Activated naive CD4-positive, alpha-beta T cell treated with anti-CD3 and anti-CD28 coated beads for 36 hours (primary cell): ENCODE measurements at regions of chr20 and their contacts with region 1.

Region 1: DNA sequence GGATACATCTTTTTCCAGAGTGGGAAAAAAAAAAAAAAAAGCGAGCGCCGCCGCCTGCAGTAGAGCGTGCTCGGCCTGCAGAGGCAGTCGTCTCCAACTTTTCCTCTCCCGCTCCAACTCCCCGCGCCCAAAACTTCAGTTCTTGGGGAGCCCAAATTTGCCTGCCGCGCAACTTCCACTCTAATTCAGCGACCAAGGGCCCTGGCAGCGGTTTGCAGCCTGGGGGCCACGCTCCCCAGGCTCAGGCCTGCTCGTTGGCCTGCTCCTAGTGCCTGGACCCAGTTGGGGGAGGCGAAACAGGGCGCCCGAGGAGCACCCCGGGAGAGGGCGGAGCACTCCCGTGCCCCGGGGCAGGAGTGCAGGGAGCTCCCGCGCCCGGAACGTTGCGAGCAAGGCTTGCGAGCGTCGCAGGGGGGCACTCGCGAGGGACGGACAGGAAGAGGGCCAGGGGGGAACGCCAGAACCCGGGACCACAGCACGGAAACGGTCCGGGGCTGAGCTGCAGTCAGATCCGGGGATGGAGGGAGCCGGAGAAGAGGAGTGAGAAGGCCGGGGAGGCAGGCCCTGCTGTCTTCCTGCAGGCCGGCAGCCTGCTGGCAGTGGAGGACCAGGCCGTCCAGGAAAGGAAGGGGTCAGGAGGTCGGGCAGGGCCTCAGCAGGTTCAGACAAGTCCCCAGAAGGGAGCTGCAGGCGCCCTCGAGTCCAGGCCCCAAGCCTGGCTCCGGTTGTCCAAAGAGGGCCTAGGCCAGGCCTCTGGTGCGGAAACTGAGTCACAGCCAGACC is at the start of gene STX16:
- DNase-seq: peak; percentile 93
- H3K4me3 Mint-ChIP-seq: peak within 1 kb of the TSS; percentile 95
- H3K27ac Mint-ChIP-seq: peak within 1 kb of the TSS; percentile 99
- H3K4me1 Mint-ChIP-seq: peaks cover 17% of the 10 kb centered on the region
- H3K27me3 Mint-ChIP-seq: no peaks in the 10 kb centered on the region
- total RNA-seq, gene STX16: 127 TPM

Region 2: DNA sequence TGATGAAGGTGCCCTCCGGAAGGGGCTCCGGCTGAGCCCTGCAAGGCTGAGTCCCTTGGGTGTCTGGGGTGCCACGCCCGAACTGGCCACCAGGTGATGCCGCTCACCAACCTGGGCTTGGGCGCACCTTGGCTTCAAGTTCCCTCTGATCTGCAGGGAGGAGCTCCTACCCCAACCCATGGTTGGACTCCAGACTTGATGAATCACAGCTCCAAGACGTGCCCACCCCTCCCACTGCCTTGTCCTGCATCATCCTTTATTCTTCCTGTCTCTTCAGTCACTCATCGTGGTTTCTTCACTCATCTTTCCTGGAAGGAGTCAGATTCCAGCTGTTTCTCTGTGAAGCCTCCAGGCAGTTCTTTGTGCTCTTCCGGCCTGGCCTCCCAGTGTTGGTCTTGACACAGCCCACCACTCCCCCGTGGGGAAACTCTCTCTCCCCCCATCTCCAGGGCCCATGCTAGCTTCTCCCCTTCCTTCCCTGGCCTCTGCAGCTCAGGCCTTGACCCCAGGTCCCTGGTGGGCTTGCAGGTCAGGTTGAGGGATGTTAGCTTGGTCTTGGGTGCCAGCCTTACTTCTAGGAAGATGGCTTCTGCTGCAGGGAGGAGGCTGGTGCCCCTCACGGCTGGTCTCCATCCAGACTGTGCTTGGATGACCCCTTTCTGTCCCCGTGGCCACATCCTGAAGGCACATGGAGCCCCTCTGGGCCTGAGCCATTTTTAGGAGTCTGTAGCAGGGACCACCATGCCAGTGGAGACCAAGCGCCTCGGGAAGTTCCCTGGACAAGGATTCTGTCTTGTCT is 1028.2 kb before region 1 on chr20:
- CTCF ChIA-PET with region 1: no interaction called
- intact Hi-C with region 1: loop called (anchors 5 kb)
- DNase-seq: peak; percentile 88
- H3K4me3 Mint-ChIP-seq: no peak overlapping the region
- H3K27ac Mint-ChIP-seq: no peak overlapping the region
- H3K4me1 Mint-ChIP-seq: peaks cover 71% of the 10 kb centered on the region
- H3K27me3 Mint-ChIP-seq: no peaks in the 10 kb centered on the region

Region 3: GRCh38 chr20:58309575-58310290 is 341.2 kb before region 1 on chr20 and contains the start of gene RAB22A:
- CTCF ChIA-PET with region 1: no interaction called
- intact Hi-C with region 1: loop called (anchors 2 kb)
- DNase-seq: peak; percentile 81
- H3K4me3 Mint-ChIP-seq: peak within 1 kb of the TSS; percentile 93
- H3K27ac Mint-ChIP-seq: peak within 1 kb of the TSS; percentile 90
- H3K4me1 Mint-ChIP-seq: peaks cover 72% of the 10 kb centered on the region
- H3K27me3 Mint-ChIP-seq: no peaks in the 10 kb centered on the region
- total RNA-seq, gene RAB22A: 9.3 to 9.8 TPM

Region 4: DNA sequence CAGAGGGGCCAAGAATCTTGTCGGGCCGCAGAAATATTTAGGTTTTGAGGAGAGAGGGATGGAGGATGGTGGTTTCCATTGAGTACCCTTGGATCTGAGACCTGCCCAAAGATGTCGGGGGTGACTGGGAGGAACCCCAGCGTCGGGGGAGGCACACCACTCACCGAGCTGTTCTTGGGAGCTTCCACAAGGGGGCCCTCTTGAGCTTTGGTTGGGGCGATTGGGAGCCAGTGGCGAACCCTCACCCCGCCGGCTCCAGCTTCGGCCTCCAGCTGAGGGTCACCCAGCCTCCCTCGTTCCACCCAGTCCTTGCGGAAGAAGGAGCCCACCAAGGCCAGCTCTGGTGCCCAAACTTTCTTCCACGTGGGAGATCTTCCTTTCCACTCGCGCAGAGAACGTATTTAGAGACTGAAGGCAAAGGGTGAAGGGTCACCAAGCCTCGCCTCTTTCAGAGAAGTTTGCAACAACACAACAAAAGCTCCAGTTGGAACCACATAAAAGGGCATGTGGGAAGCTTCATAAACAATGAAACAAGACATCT is 169.4 kb before region 1 on chr20:
- CTCF ChIA-PET with region 1: no interaction called
- intact Hi-C with region 1: loop called (anchors 1 kb)
- DNase-seq: peak; percentile 71
- H3K4me3 Mint-ChIP-seq: no peak overlapping the region
- H3K27ac Mint-ChIP-seq: no peak overlapping the region
- H3K4me1 Mint-ChIP-seq: peaks cover 3% of the 10 kb centered on the region
- H3K27me3 Mint-ChIP-seq: peaks cover 15% of the 10 kb centered on the region

Region 5: GRCh38 chr20:58612121-58612691 is 38.8 kb before region 1 on chr20:
- CTCF ChIA-PET with region 1: no interaction called
- intact Hi-C with region 1: no loop called
- DNase-seq: no peak
- H3K4me3 Mint-ChIP-seq: no peak overlapping the region
- H3K27ac Mint-ChIP-seq: no peak overlapping the region
- H3K4me1 Mint-ChIP-seq: no peaks in the 10 kb centered on the region
- H3K27me3 Mint-ChIP-seq: no peaks in the 10 kb centered on the region

Region 6: DNA sequence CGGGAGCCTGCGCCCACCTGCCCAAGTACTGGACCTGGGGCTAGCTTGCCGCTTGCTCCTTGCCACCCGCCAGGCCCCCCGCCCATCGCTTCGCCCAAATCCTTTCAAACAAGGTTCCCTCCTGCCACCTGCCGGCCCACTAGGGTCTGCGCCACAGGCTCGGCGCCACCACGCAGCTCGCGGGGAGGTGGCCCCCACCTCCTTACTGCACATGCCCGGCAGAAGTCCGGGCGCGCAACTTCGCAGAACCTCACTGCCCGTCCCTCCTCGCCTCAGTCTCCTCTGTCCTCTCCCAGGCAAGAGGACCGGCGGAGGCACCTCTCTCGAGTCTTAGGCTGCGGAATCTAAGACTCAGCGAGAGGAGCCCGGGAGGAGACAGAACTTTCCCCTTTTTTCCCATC is 188.5 kb after region 1 on chr20:
- CTCF ChIA-PET with region 1: interaction called, 3 read pairs
- intact Hi-C with region 1: loop called (anchors 2 kb)
- DNase-seq: peak; percentile 63
- H3K4me3 Mint-ChIP-seq: peak overlapping the region; percentile 51
- H3K27ac Mint-ChIP-seq: no peak overlapping the region
- H3K4me1 Mint-ChIP-seq: peaks cover 12% of the 10 kb centered on the region
- H3K27me3 Mint-ChIP-seq: peaks cover 44% of the 10 kb centered on the region

Region 7: DNA sequence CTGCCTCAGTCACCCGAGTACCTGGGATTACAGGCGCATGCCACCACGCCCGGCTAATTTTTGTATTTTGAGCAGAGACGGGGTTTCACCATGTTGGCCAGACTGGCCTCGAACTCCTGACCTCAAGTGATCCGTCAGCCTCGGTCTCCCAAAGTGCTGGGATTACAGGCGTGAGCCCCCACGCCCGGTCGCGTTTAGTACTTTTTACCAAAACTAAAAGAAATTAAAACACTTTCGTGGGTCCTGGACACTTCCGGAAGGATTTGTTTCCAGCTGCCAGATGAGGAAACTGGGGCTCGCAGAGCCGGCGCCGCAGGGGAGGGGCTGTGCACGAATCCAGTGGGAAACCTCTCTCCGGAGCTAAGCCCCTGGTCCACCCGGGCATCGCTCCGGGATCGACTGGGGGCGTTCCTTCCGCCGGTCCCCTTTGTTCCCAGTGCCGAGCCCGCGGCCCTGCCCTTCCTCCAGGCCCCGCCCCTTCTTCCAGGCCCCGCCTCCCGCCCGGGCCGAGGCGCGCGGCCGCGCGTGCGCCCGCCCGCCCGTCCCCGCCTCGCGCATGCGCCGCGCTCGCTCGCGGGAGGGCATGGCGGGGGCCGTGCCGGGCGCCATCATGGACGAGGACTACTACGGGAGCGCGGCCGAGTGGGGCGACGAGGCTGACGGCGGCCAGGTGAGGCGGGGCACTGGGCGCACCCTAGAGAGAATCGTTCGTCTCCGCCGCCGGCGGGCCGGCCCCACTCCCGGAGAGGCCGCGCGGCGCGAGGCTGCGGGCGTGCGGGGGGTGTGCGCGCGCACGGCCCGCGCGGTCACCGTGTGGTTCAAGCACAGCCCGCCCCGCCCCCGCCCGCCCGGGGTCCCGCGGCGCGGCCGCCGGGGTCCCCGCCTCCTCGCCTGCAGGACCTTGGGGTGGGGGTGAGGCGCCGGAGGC is 330.0 kb after region 1 on chr20 and contains the start of gene NELFCD:
- CTCF ChIA-PET with region 1: no interaction called
- intact Hi-C with region 1: loop called (anchors 5 kb)
- DNase-seq: peak; percentile 87
- H3K4me3 Mint-ChIP-seq: peak within 1 kb of the TSS; percentile 91
- H3K27ac Mint-ChIP-seq: peak within 1 kb of the TSS; percentile 79
- H3K4me1 Mint-ChIP-seq: peaks cover 33% of the 10 kb centered on the region
- H3K27me3 Mint-ChIP-seq: no peaks in the 10 kb centered on the region
- total RNA-seq, gene NELFCD: 102 to 103 TPM

Region 8: DNA sequence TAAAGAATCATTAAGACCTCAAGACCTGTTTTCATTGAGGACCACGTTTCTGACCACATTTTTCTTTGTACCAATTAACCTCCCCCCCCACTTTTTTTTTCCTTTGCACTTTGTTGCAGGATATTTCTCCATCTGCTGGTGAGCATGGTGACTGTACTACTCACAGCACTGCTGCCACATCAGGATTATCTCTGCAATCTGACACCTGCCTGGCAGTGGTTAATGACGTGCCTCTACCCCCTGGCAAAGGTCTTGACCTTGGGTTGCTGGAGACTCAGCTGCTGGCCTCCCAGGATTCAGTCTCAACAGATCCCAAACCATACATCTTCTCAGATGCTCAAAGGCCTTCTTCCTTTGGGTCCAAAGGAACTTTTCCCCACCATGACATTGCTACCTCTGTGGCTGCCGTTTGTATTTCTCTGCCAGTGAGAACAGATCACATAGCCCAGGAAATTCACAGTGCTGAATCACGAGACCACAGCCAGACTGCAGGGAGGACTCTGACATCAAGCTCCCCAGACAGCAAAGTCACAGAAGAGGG is 602.9 kb after region 1 on chr20:
- CTCF ChIA-PET with region 1: no interaction called
- intact Hi-C with region 1: loop called (anchors 5 kb)
- DNase-seq: peak; percentile 64
- H3K4me3 Mint-ChIP-seq: peak overlapping the region; percentile 16
- H3K27ac Mint-ChIP-seq: peak overlapping the region; percentile 92
- H3K4me1 Mint-ChIP-seq: peaks cover 50% of the 10 kb centered on the region
- H3K27me3 Mint-ChIP-seq: no peaks in the 10 kb centered on the region